ENCODE measurements at regions of chr18 and their contacts with region 1.

Region 1: GRCh38 chr18:8584798-8585197 is 24.4 kb upstream of the RAB12 start:
- DNase-seq: no peak
- ATAC-seq: no peak
- H3K4me3 Mint-ChIP-seq: no peak overlapping the region
- H3K27ac Mint-ChIP-seq: no peak overlapping the region
- H3K4me1 Mint-ChIP-seq: no peaks in the 10 kb centered on the region
- H3K27me3 Mint-ChIP-seq: peaks cover 9% of the 10 kb centered on the region

Region 2: GRCh38 chr18:8426401-8426800 is 158.4 kb before region 1 on chr18:
- CTCF ChIA-PET with region 1: no interaction called
- POLR2A ChIA-PET with region 1: no interaction called
- intact Hi-C with region 1: loop called in 1 of 2 experiments (anchors 10 kb)
- DNase-seq: peak; percentile 54
- ATAC-seq: no peak
- H3K4me3 Mint-ChIP-seq: no peak overlapping the region
- H3K27ac Mint-ChIP-seq: no peak overlapping the region
- H3K4me1 Mint-ChIP-seq: no peaks in the 10 kb centered on the region
- H3K27me3 Mint-ChIP-seq: no peaks in the 10 kb centered on the region

Measured in activated CD4-positive, alpha-beta T cell treated with anti-CD3 and anti-CD28 coated beads for 36 hours (primary cell).